Psoas muscle (tissue), 8 donors: ENCODE measurements at regions of chr6 and their contacts with region 1.

Region 1: GRCh38 chr6:16319813-16320532 is 81.6 kb downstream of the GMPR start:
- DNase-seq: peak; percentile 80 to 92
- ATAC-seq: peak; percentile 78 to 86 (median 82)
- H3K4me3 ChIP-seq: peak overlapping the region; percentile 59
- H3K27ac ChIP-seq: peak overlapping the region; percentile 99
- H3K4me1 ChIP-seq: peaks cover 71% of the 10 kb centered on the region
- H3K27me3 ChIP-seq: no peaks in the 10 kb centered on the region
- CTCF ChIP-seq: no peak

Region 2: GRCh38 chr6:16286148-16286522 is 33.8 kb before region 1 on chr6:
- intact Hi-C with region 1: loop called (anchors 5 kb)
- DNase-seq: no peak
- ATAC-seq: peak; percentile 41 to 62 (median 55)
- H3K4me3 ChIP-seq: no peak overlapping the region
- H3K27ac ChIP-seq: peak overlapping the region; percentile 25
- H3K4me1 ChIP-seq: peaks cover 27% of the 10 kb centered on the region
- H3K27me3 ChIP-seq: no peaks in the 10 kb centered on the region
- CTCF ChIP-seq: peak; percentile 57

Region 3: DNA sequence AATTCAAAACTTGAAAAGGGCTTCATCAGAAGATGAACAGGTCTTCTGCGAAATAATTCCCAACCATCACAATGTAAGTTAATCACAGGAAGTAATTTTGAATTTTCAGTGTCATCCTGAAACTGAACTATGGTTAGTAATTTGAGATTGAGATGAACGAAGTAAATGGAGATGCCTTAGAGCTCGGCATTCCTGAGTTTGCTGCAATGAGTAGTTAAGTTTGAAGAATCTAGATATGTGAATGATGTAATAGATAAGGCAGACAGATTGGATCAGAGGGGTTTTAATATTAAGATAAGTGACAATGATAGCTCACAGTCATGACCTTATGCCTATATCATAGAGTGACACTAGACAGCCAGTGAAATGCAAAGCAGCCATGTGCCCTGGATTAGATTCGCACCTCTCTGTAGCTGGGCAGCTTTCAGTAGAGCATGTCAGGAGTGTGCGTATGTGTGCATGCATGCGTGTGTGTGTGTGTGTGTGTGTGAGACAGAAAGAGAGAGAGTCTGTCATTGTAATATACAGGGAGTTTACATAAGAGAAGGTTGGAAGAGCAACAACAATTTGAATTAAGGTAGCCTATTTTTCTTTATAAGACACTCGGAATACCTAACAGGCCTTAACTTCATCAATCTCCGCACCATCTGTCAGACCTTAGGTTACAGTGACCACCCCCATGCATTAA is 151.4 kb after region 1 on chr6:
- intact Hi-C with region 1: no loop called
- DNase-seq: no peak
- ATAC-seq: peak in 3 of 4 donors; percentile 46 to 58 (median 53)
- H3K4me3 ChIP-seq: no peak overlapping the region
- H3K27ac ChIP-seq: no peak overlapping the region
- H3K4me1 ChIP-seq: no peaks in the 10 kb centered on the region
- H3K27me3 ChIP-seq: no peaks in the 10 kb centered on the region
- CTCF ChIP-seq: no peak

Region 4: DNA sequence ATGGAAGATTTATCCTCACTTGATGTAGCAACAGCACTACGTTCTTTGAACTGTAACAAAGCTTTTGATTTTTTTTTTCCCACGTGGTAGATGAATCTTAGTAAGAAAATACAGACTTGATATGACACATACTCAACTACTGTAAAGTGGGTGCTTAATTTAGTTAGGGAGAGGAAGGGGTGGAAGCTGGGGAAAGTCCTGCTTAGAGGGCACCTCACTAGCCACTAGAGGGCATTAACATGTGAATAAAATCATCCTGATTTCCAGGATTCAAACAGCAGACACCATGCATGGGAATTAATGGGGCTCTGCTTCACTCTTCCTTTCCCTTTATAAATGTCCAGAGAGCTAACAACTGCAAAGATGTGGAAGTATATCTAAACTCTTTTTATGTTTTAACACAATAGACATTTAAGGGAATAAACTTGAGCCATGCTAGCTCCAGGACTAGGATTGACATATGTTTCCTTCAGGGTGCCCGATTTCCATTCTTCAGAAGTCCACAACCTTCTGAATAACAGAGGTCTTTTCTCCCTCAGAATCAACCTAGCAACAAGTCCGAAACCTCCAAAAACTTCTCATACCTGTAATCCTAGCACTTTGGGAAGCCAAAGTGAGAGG is 191.2 kb after region 1 on chr6:
- intact Hi-C with region 1: no loop called
- DNase-seq: no peak
- ATAC-seq: peak; percentile 51 to 70 (median 62)
- H3K4me3 ChIP-seq: no peak overlapping the region
- H3K27ac ChIP-seq: no peak overlapping the region
- H3K4me1 ChIP-seq: peaks cover 41% of the 10 kb centered on the region
- H3K27me3 ChIP-seq: no peaks in the 10 kb centered on the region
- CTCF ChIP-seq: peak; percentile 58